CD4-positive, alpha-beta T cell (primary cell): ENCODE measurements at regions of chr22 and their contacts with region 1.

Region 1: DNA sequence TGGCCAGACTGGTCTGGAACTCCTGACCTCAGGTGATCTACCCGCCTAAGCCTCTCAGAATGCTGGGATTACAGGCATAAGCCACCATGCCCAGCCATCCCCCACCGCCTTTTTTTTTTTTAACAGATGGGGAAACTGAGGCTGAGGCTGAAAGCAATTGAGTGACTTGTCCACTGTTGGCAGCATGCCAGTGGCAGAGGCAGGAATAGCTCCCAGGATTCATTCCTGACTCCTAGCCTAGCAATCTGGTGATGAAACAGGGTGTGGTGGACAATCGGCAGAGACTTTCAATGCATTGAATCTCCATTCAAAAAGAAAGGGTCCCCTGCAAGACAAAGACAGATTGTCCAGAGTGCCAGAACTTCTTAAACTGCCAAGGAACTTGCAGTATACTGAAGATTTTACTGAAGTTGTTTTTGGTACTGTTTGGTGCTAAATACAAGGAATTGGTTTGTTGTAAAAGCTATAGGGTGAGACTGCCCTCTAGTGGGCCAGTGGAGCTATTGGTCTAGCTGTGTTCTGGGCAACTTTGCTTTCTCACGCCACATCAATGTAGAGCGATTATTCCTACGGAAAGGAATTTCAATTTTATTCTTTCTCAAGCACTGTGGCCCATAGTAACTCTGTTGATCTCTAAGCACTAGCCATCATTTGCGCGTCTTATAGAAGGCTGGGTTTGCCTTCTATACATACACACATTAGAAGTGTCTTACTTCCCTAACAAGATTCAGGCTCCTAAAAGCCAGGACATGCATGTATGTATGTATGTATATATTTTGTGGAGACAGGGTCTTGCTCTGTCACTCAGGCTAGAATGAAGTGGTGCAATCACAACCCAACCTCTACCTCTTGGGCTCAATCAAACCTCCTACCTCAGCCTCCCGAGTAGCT is 21.0 kb downstream of the C22orf31 start:
- DNase-seq: peak; percentile 40 to 85 (median 55)
- ATAC-seq: peak; percentile 75
- H3K4me3 ChIP-seq: no peak overlapping the region
- H3K4me3 Mint-ChIP-seq: no peak overlapping the region
- H3K27ac ChIP-seq: no peak overlapping the region
- H3K27ac Mint-ChIP-seq: no peak overlapping the region
- H3K4me1 ChIP-seq: no peaks in the 10 kb centered on the region
- H3K4me1 Mint-ChIP-seq: no peaks in the 10 kb centered on the region
- H3K27me3 ChIP-seq: no peaks in the 10 kb centered on the region
- H3K27me3 Mint-ChIP-seq: no peaks in the 10 kb centered on the region
- CTCF ChIP-seq: peak; percentile 97

Region 2: DNA sequence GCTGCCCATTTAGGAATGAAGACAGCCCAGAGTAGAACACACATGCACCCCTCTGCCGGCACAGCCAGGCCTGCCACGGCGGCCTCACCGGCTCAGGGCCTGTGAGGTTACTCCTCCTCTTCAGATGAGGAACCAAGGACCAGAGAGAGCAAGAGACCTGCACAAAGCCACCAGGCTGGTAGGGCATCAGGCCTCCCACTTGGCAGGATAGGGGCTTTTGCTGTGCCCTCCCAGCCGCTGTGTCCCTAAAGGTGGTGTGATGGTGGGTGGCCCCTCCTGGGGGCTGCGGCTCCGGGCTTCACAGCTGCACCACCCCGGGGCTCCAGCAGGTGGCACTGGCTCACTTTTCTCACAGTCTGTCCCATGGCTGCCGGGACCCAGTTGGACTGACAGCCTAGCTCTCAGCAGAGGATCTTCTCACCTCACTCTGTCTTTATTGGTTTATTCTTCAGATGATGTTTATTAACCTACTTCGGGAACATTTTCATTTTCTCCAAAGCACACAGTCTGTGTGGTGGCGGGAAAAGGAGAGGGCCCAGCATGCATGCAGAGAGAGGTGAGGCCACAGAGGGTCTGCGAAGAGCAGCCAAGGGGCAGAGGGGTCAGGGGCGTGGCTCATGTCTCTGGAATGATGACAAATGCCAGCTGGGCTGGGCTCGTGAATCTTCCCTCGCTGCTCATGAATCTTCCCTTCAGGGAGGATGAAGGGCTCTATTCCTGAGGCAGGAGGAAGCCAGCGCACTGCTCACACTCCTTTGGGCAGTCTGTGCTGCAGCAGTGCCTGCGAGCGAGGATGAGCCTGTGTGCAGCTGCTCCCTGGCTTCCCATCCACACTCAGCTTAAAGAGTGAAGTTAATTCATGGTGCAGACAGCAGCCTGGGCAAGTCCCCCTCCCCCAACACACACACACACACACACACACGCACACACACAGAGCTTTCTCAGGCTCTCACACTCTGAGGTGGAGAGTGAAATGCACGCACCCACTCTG is 1020.5 kb before region 1 on chr22:
- CTCF ChIA-PET with region 1: interaction called, 6 read pairs
- POLR2A ChIA-PET with region 1: no interaction called
- intact Hi-C with region 1: loop called (anchors 2 to 10 kb)
- DNase-seq: peak; percentile 44 to 74 (median 55)
- ATAC-seq: peak; percentile 84
- H3K4me3 ChIP-seq: no peak overlapping the region
- H3K4me3 Mint-ChIP-seq: no peak overlapping the region
- H3K27ac ChIP-seq: no peak overlapping the region
- H3K27ac Mint-ChIP-seq: no peak overlapping the region
- H3K4me1 ChIP-seq: peaks cover 6% of the 10 kb centered on the region
- H3K4me1 Mint-ChIP-seq: no peaks in the 10 kb centered on the region
- H3K27me3 ChIP-seq: no peaks in the 10 kb centered on the region
- H3K27me3 Mint-ChIP-seq: no peaks in the 10 kb centered on the region
- CTCF ChIP-seq: peak; percentile 87

Region 3: GRCh38 chr22:28791841-28792490 is 248.7 kb before region 1 on chr22:
- CTCF ChIA-PET with region 1: interaction called, 5 read pairs
- POLR2A ChIA-PET with region 1: no interaction called
- intact Hi-C with region 1: loop called in 1 of 2 experiments (anchors 5 kb)
- DNase-seq: no peak
- ATAC-seq: no peak
- H3K4me3 ChIP-seq: no peak overlapping the region
- H3K4me3 Mint-ChIP-seq: no peak overlapping the region
- H3K27ac ChIP-seq: peak overlapping the region in 1 of 2 donors; percentile 2
- H3K27ac Mint-ChIP-seq: peak overlapping the region; percentile 4
- H3K4me1 ChIP-seq: peaks cover 44% of the 10 kb centered on the region
- H3K4me1 Mint-ChIP-seq: peaks cover 67% of the 10 kb centered on the region
- H3K27me3 ChIP-seq: no peaks in the 10 kb centered on the region
- H3K27me3 Mint-ChIP-seq: no peaks in the 10 kb centered on the region
- CTCF ChIP-seq: no peak

Region 4: GRCh38 chr22:28855355-28856094 is 185.1 kb before region 1 on chr22:
- CTCF ChIA-PET with region 1: interaction called, 33 read pairs
- POLR2A ChIA-PET with region 1: interaction called, 10 read pairs
- intact Hi-C with region 1: loop called (anchors 1 kb)
- DNase-seq: peak in 12 of 14 experiments; percentile 4 to 81 (median 22)
- ATAC-seq: peak; percentile 55
- H3K4me3 ChIP-seq: no peak overlapping the region
- H3K4me3 Mint-ChIP-seq: no peak overlapping the region
- H3K27ac ChIP-seq: no peak overlapping the region
- H3K27ac Mint-ChIP-seq: no peak overlapping the region
- H3K4me1 ChIP-seq: no peaks in the 10 kb centered on the region
- H3K4me1 Mint-ChIP-seq: no peaks in the 10 kb centered on the region
- H3K27me3 ChIP-seq: peaks cover 0 to 3% of the 10 kb centered on the region in 2 experiments
- H3K27me3 Mint-ChIP-seq: peaks cover 24% of the 10 kb centered on the region
- CTCF ChIP-seq: peak; percentile 88

Region 5: DNA sequence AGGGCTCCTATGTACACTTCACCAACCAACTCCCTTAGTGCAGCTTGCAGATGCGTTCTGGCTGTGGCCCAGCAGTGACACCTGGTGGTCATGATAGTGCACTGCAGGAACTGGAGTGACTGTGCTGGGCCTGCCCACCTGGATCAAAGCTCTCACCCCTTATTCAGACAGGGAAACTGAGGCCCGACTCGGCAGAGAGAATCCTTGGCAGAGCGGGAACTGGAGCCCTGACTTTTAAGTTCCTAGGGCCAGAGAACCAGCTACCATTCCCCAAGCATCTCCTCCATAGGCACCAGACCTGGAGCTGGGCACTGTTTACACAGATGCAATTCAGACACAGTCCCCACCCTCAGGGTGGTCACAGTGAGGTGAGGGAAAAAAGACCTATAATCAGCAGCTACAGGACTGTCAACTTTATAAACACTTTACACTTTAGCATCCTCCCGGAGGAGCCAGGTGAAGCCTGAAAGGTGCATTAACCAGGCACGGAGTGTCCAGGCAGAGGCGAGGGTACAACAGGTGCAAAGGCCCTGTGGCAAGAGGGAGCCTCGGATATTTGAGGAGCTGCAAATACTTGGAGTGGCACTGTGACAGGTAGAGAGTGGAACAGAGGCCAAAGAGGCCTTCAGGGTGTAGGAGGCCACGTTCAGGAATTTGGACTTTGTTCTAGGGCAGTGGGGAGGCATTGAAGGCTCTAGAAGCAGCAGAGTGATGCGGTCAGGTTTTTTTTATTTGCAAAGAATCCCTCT is 205.2 kb after region 1 on chr22:
- CTCF ChIA-PET with region 1: interaction called, 3 read pairs
- POLR2A ChIA-PET with region 1: no interaction called
- intact Hi-C with region 1: loop called in 1 of 2 experiments (anchors 5 kb)
- DNase-seq: peak; percentile 49 to 78 (median 59)
- ATAC-seq: peak; percentile 95
- H3K4me3 ChIP-seq: no peak overlapping the region
- H3K4me3 Mint-ChIP-seq: no peak overlapping the region
- H3K27ac ChIP-seq: no peak overlapping the region
- H3K27ac Mint-ChIP-seq: no peak overlapping the region
- H3K4me1 ChIP-seq: peaks cover 4% of the 10 kb centered on the region
- H3K4me1 Mint-ChIP-seq: no peaks in the 10 kb centered on the region
- H3K27me3 ChIP-seq: no peaks in the 10 kb centered on the region
- H3K27me3 Mint-ChIP-seq: peaks cover 19% of the 10 kb centered on the region
- CTCF ChIP-seq: peak; percentile 96